ENCODE measurements at regions of chr13 and their contacts with region 1.

Region 1: DNA sequence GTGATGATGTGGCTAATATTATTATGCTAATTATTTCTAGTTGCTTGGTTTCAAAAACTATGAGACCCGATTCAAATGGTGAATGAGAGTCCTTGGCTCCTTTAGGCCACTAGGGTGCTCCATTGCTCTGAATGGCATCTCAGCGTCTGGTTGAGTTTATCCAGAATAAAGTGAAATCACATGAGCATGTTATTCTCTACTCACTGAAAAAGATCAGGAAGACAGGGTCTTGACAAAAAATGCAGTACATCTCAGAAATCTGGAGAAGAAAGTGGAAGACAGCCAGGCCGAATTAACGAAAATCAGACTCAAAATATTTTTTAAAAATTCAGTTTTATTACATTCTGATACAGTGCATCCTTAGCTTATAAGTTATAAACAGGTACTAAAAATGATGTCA is 516.2 kb downstream of the MYO16 start:
- DNase-seq: no peak
- ATAC-seq: peak; percentile 71
- H3K4me3 Mint-ChIP-seq: no peak overlapping the region
- H3K27ac Mint-ChIP-seq: no peak overlapping the region
- H3K4me1 Mint-ChIP-seq: no peaks in the 10 kb centered on the region
- H3K27me3 Mint-ChIP-seq: peaks cover 25% of the 10 kb centered on the region
- CTCF ChIP-seq: peak; percentile 64

Region 2: DNA sequence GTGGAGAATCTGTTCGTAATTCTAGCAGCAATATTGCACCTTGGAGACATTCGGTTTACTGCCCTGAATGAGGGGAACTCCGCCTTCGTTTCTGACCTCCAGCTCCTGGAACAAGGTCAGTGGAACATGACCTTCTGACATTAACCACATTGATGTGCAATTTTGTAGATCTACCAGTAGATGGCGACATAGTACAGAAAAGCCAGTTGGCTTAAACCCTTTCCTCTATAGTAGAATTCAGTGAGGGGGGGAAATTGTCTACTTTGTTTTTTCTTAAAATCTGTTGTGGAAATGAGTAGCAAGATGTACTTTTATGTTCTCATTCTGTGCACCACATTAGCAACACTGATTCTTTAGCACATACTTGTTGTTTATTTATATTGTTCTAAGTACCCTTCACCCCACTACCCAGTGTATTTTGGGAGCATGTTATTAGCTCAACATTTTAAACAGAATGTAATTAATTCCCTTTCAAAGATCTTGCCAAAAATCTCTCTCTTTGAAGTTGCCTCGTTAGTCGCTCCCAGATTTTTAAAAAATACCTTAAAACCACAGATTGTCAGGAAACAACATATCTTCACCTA is 184.0 kb before region 1 on chr13:
- CTCF ChIA-PET with region 1: no interaction called
- POLR2A ChIA-PET with region 1: no interaction called
- intact Hi-C with region 1: loop called (anchors 5 kb)
- DNase-seq: no peak
- ATAC-seq: peak; percentile 75
- H3K4me3 Mint-ChIP-seq: no peak overlapping the region
- H3K27ac Mint-ChIP-seq: no peak overlapping the region
- H3K4me1 Mint-ChIP-seq: no peaks in the 10 kb centered on the region
- H3K27me3 Mint-ChIP-seq: peaks cover 2% of the 10 kb centered on the region
- CTCF ChIP-seq: peak; percentile 94

Region 3: GRCh38 chr13:109126891-109127641 is 18.6 kb before region 1 on chr13:
- CTCF ChIA-PET with region 1: no interaction called
- POLR2A ChIA-PET with region 1: no interaction called
- intact Hi-C with region 1: no loop called
- DNase-seq: no peak
- ATAC-seq: no peak
- H3K4me3 Mint-ChIP-seq: no peak overlapping the region
- H3K27ac Mint-ChIP-seq: no peak overlapping the region
- H3K4me1 Mint-ChIP-seq: peaks cover 19% of the 10 kb centered on the region
- H3K27me3 Mint-ChIP-seq: peaks cover 2% of the 10 kb centered on the region
- CTCF ChIP-seq: no peak

Region 4: DNA sequence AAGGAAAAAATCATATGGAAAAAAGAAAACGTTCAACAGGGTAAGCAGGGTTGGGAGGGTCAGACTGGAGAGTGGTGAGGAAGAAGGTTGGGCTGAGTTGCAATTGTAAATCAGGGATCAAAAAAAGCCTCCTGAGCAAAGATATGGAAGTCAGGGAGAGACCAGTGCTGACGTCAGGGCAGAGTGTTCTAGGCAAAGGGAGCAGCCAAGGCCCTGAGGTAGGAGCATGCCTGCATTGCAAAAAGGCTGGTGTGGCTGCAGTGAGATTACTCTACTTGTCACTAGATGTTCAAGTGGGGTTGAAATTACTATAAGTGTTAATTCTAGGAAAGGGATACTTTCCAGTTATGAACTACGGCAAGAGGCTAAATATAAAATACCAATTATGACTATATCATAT is 45.8 kb after region 1 on chr13:
- CTCF ChIA-PET with region 1: no interaction called
- POLR2A ChIA-PET with region 1: no interaction called
- intact Hi-C with region 1: loop called (anchors 5 kb)
- DNase-seq: no peak
- ATAC-seq: no peak
- H3K4me3 Mint-ChIP-seq: no peak overlapping the region
- H3K27ac Mint-ChIP-seq: no peak overlapping the region
- H3K4me1 Mint-ChIP-seq: no peaks in the 10 kb centered on the region
- H3K27me3 Mint-ChIP-seq: peaks cover 3% of the 10 kb centered on the region
- CTCF ChIP-seq: no peak

Region 5: GRCh38 chr13:109233293-109233692 is 87.7 kb after region 1 on chr13:
- CTCF ChIA-PET with region 1: no interaction called
- POLR2A ChIA-PET with region 1: no interaction called
- intact Hi-C with region 1: no loop called
- DNase-seq: no peak
- ATAC-seq: no peak
- H3K4me3 Mint-ChIP-seq: no peak overlapping the region
- H3K27ac Mint-ChIP-seq: no peak overlapping the region
- H3K4me1 Mint-ChIP-seq: no peaks in the 10 kb centered on the region
- H3K27me3 Mint-ChIP-seq: peaks cover 2% of the 10 kb centered on the region
- CTCF ChIP-seq: no peak

Region 6: GRCh38 chr13:109297628-109298027 is 152.0 kb after region 1 on chr13:
- CTCF ChIA-PET with region 1: no interaction called
- POLR2A ChIA-PET with region 1: no interaction called
- intact Hi-C with region 1: loop called (anchors 5 kb)
- DNase-seq: no peak
- ATAC-seq: no peak
- H3K4me3 Mint-ChIP-seq: no peak overlapping the region
- H3K27ac Mint-ChIP-seq: no peak overlapping the region
- H3K4me1 Mint-ChIP-seq: no peaks in the 10 kb centered on the region
- H3K27me3 Mint-ChIP-seq: no peaks in the 10 kb centered on the region
- CTCF ChIP-seq: no peak

Region 7: GRCh38 chr13:110412132-110412914 is 1266.7 kb after region 1 on chr13:
- CTCF ChIA-PET with region 1: no interaction called
- POLR2A ChIA-PET with region 1: no interaction called
- intact Hi-C with region 1: loop called (anchors 2 kb)
- DNase-seq: peak; percentile 39
- ATAC-seq: peak; percentile 90
- H3K4me3 Mint-ChIP-seq: no peak overlapping the region
- H3K27ac Mint-ChIP-seq: no peak overlapping the region
- H3K4me1 Mint-ChIP-seq: peaks cover 3% of the 10 kb centered on the region
- H3K27me3 Mint-ChIP-seq: peaks cover 24% of the 10 kb centered on the region
- CTCF ChIP-seq: peak; percentile 71

Measured in activated B cell treated with CpG ODN at 0.5 μM for 24 hours (primary cell).